ENCODE measurements at regions of chr19 and their contacts with region 1.

Region 1: GRCh38 chr19:40523322-40524047 is 53.2 kb upstream of the SHKBP1 start:
- DNase-seq: peak; percentile 87
- ATAC-seq: peak; percentile 91
- H3K4me3 Mint-ChIP-seq: no peak overlapping the region
- H3K27ac Mint-ChIP-seq: no peak overlapping the region
- H3K4me1 Mint-ChIP-seq: peaks cover 6% of the 10 kb centered on the region
- H3K27me3 Mint-ChIP-seq: peaks cover 65% of the 10 kb centered on the region
- CTCF ChIP-seq: peak; percentile 75

Region 2: DNA sequence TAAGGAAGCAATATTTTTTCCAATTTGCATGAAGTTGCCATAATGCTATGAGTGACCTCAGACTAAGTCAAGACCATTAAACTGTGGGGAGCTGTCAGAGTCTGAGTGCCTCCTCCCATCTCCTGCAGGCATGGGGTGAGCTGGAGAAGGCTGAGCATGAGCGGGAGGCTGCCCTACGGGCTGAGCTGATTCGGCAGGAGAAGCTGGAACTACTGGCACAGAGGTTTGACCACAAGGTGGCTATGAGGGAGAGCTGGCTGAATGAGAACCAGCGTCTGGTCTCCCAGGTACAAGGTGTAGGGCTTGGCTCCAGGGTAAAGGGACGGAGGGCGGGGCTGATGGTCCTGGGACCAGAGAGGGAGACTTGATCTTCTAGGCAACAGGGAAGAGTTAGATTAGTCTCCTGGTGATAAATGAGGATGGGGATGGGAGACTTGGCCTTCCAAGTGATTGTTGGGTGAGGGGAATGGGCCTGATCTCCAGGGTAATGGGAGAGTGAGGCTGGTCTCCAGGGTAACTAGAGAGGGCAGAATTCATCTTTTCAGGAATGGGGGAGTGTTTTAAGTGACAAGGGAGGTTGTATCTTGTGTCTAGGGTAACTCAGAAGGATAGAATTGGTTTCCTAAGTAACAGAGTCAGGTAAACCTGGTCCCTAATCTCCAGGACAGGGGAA is 20.7 kb before region 1 on chr19:
- CTCF ChIA-PET with region 1: interaction called, 11 read pairs
- POLR2A ChIA-PET with region 1: interaction called, 3 read pairs
- DNase-seq: peak; percentile 51
- ATAC-seq: peak; percentile 96
- H3K4me3 Mint-ChIP-seq: no peak overlapping the region
- H3K27ac Mint-ChIP-seq: no peak overlapping the region
- H3K4me1 Mint-ChIP-seq: no peaks in the 10 kb centered on the region
- H3K27me3 Mint-ChIP-seq: peaks cover 59% of the 10 kb centered on the region
- CTCF ChIP-seq: no peak

Region 3: DNA sequence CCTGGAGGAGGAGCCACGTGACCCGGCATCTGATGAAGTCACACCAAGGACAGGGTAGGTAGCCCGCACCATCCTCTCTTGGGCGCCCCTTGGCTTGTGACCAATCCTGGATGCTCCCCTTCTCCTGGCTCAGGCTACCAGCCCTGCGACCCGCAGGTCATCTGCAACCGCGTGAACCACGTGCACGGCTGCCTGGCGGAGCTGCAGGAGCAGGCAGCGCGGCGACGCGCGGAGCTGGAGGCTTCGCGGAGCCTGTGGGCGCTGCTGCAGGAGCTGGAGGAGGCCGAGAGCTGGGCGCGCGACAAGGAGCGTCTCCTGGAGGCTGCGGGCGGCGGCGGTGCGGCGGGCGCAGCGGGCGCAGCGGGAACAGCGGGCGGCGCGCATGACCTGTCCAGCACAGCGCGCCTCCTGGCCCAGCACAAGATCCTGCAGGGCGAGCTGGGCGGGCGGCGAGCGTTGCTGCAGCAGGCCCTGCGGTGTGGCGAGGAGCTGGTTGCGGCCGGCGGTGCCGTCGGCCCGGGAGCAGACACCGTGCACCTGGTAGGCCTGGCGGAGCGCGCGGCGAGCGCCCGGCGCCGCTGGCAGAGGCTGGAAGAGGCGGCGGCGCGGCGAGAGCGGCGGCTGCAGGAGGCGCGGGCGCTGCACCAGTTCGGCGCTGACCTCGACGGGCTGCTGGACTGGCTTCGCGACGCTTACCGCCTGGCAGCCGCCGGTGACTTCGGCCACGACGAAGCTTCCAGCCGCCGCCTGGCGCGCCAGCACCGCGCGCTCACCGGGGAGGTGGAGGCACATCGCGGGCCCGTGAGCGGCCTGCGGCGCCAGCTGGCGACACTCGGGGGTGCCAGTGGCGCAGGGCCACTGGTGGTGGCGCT is 10.8 kb before region 1 on chr19:
- CTCF ChIA-PET with region 1: interaction called, 21 read pairs
- POLR2A ChIA-PET with region 1: interaction called, 3 read pairs
- DNase-seq: peak; percentile 67
- ATAC-seq: peak; percentile 69
- H3K4me3 Mint-ChIP-seq: peak overlapping the region; percentile 56
- H3K27ac Mint-ChIP-seq: no peak overlapping the region
- H3K4me1 Mint-ChIP-seq: 0 out of 2 replicates have a peak, but pooled peaks cover 3% of the 10 kb centered on the region
- H3K27me3 Mint-ChIP-seq: peaks cover 94% of the 10 kb centered on the region
- CTCF ChIP-seq: no peak

Region 4: GRCh38 chr19:40889366-40889765 is 365.9 kb after region 1 on chr19:
- CTCF ChIA-PET with region 1: no interaction called
- POLR2A ChIA-PET with region 1: no interaction called
- DNase-seq: no peak
- ATAC-seq: no peak
- H3K4me3 Mint-ChIP-seq: no peak overlapping the region
- H3K27ac Mint-ChIP-seq: no peak overlapping the region
- H3K4me1 Mint-ChIP-seq: no peaks in the 10 kb centered on the region
- H3K27me3 Mint-ChIP-seq: peaks cover 18% of the 10 kb centered on the region
- CTCF ChIP-seq: no peak

Measured in WTC11 (cell line).